Activated CD4-positive, alpha-beta T cell treated with anti-CD3 and anti-CD28 coated beads, Interleukin-2, amount 10 ng/mL, durations not matched to agents 7 days and 5 days (primary cell): ENCODE measurements at regions of chr7 and their contacts with region 1.

Region 1: GRCh38 chr7:92621026-92621540 is 30.9 kb upstream of the FAM133B start:
- DNase-seq: peak; percentile 89
- H3K4me3 Mint-ChIP-seq: peak overlapping the region; percentile 25
- H3K27ac Mint-ChIP-seq: peak overlapping the region; percentile 85
- H3K4me1 Mint-ChIP-seq: peaks cover 51% of the 10 kb centered on the region
- H3K27me3 Mint-ChIP-seq: no peaks in the 10 kb centered on the region

Region 2: DNA sequence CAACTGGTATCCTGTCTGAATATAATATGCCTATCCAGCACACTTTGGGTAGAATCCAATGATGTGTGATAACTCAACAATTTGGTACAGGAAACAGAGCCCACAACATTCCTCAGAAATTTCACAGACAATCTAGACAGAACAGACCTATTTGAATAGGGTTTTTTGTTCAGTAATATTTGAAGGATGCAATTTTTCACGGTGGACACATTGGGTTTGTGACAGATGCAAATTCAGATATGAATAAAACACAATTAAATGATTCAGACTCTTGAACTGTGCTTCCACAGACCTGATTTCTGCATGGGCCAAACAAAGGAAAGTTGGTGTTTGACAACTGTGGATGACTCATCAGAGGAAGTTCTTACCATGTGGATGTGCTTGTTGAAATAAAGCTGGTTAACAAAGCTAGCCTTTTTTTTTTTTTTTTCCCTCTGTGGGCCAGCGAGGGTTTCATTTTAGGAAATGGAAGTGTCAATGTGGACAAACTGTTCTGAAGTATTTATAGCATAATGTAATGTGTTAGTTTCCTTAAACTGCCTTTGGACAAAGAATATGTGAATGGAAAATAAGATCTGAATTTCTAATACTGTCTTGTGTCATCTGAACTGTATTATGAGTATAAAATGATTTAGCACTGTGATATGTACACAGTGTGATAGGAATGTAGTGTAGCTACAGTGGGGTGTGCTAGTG is 12.3 kb after region 1 on chr7:
- CTCF ChIA-PET with region 1: interaction called, 10 read pairs
- POLR2A ChIA-PET with region 1: no interaction called
- DNase-seq: peak; percentile 33
- H3K4me3 Mint-ChIP-seq: peak overlapping the region; percentile 14
- H3K27ac Mint-ChIP-seq: peak overlapping the region; percentile 73
- H3K4me1 Mint-ChIP-seq: peaks cover 53% of the 10 kb centered on the region
- H3K27me3 Mint-ChIP-seq: no peaks in the 10 kb centered on the region